Testis (tissue), 5 donors: ENCODE measurements at regions of chr5 and their contacts with region 1.

Region 1: DNA sequence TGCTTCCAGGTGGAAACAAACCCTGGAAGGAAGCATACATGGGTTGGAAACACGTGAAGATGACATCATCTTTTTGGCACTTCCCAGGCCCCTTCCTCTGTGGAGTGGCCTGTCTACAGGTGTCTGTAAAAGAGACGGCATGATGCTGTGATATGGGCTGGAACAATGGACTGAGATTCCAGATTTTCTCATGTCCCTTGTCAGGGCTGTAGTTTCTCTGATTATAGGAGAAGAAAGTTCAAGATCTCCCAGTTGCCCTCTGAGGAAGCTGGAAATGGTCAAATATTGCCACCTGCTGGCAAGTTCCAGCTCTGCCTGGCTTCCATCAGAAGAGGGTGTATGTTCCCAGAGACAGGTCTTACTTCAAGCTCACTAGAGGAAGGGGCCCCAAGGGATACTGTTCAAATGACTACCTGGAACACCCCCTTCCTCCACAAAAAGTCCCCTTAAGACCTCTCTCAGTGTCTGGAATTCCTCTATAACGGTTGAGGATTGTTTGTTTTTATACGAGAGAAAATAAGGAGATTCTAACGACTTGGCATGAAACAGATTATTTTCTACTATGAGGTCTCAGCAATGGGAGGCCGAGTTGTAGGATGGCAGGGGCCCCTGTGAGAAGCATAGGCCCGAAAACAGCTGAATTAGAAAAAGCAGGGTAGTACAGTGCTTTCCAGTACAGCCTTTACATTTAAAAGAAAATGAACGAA is 7.3 kb upstream of the ANXA6 start:
- DNase-seq: peak; percentile 87
- H3K4me3 ChIP-seq: no peak overlapping the region
- H3K27ac ChIP-seq: peak overlapping the region in 1 of 2 donors; percentile 15
- H3K4me1 ChIP-seq: peaks cover 44% of the 10 kb centered on the region
- H3K27me3 ChIP-seq: no peaks in the 10 kb centered on the region
- CTCF ChIP-seq: peak; percentile 77 to 91 (median 79)
- POLR2A ChIP-seq: no peak

Region 2: DNA sequence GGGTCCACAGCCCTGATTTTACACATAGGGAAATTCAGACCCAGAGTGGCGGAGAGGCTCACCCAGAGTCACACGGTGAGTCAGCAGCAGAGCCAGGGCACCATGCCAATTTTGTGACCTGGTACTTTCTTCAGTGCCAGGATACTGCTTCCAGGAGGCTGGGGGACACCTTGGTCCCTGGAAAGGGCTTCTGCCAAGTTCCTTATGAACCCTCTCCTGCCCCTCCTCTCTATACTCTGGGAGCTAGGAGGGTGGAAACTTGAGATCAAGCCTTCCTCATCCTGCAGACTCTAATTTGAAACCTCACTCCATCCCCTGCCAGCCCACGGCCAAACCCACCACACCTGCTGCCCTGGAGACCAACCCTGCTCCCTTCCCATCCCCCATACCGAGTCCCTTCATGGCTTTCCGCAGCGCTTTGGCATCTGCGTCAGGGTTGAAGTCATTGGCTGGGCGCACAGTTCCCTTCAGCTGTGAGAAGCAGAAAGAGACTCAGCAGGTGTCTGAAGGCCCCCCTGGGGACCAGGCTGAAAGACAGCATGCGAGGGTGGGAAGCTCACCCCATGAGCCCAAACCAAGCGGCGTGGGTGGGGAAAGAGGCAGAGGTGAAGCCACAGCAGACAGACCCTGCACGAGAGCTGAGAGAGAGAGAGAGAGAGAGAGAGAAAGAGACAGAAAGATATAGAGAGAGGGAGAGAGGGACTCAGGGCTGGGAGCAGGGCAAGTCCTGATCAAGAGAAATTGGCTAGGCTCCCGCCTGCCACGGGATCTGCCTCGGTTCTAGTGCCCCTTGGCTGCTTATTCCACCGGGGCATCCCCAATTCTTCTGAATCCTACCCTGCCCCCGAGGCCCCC is 40.7 kb before region 1 on chr5:
- intact Hi-C with region 1: loop called (anchors 5 kb)
- DNase-seq: peak; percentile 43
- H3K4me3 ChIP-seq: no peak overlapping the region
- H3K27ac ChIP-seq: no peak overlapping the region
- H3K4me1 ChIP-seq: no peaks in the 10 kb centered on the region
- H3K27me3 ChIP-seq: no peaks in the 10 kb centered on the region
- CTCF ChIP-seq: no peak
- POLR2A ChIP-seq: no peak